Left ventricle myocardium superior (tissue), 1 donor: ENCODE measurements at regions of chr6 and their contacts with region 1.

Region 1: GRCh38 chr6:129598244-129599187 is 111.5 kb downstream of the ARHGAP18 start:
- DNase-seq: no peak
- ATAC-seq: peak; percentile 50

Region 2: DNA sequence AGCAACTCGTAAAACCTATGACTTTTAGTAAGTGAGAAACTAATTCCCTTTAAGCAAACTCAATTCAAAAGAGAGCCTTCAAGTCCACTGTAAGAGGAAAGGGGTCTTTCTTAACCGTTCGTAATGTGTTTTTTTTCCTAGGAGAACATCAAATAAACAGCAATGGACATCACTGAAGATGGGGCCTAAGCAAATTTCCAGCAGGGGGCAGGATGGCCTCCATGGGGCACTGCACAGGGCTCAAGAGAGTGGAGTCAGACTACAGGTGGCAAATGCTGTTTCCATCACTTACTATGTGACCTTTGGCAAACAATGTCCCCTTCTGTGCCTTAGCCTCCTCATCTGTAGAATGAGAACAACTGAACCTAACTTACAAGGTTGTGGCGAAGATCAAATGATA is 22.7 kb after region 1 on chr6:
- intact Hi-C with region 1: no loop called
- DNase-seq: no peak
- ATAC-seq: no peak

Region 3: GRCh38 chr6:129730477-129731165 is 132.1 kb after region 1 on chr6:
- intact Hi-C with region 1: loop called (anchors 5 kb)
- DNase-seq: no peak
- ATAC-seq: peak; percentile 38

Region 4: DNA sequence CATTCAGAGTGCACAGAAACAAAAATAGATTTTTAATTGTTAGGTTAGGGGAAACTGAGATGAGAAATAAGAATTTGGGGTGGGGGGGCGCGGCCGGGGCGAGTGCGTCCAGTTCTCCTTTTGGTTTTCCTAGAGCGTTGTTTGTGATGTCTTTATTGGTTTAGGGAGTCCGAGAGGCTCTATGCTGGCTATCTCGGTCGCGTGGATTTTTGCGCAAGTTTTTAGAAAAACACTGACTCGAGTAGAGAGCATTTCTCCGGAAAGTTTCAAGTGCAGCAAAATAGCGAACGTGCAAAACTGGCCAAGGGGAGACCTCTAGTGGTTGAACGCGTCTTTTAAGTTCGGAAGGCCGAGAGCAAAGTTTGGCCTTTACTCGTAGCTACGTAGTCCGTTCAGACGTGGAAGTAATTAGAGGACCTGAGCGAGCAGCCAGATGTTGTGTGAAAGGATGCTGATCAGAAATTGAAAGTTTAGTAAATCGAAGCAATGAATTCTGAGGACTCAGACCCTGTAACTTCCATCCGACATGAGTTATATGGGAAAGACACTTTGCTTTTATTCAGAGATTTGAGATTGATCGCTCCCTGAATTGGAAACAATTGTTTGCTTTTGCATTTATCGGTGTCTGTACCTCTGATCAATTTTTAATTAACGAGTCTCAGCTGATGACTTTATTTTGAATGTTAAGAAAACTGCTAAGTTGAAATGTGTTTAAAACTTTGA is 422.6 kb after region 1 on chr6:
- intact Hi-C with region 1: loop called (anchors 5 kb)
- DNase-seq: peak; percentile 56
- ATAC-seq: peak; percentile 88